Sigmoid colon (tissue), 7 donors: ENCODE measurements at regions of chr10 and their contacts with region 1.

Region 1: GRCh38 chr10:451021-451471 is 238.4 kb downstream of the DIP2C start:
- DNase-seq: no peak
- H3K4me3 ChIP-seq: no peak overlapping the region
- H3K27ac ChIP-seq: peak overlapping the region; percentile 11 to 83 (median 74)
- H3K4me1 ChIP-seq: peaks cover 0 to 52% (median 45%) of the 10 kb centered on the region in 4 donors
- H3K27me3 ChIP-seq: no peaks in the 10 kb centered on the region
- CTCF ChIP-seq: no peak
- EP300 ChIP-seq: no peak
- POLR2A ChIP-seq: no peak

Region 2: GRCh38 chr10:173741-174140 is 277.3 kb before region 1 on chr10:
- intact Hi-C with region 1: no loop called
- DNase-seq: no peak
- H3K4me3 ChIP-seq: no peak overlapping the region
- H3K27ac ChIP-seq: no peak overlapping the region
- H3K4me1 ChIP-seq: peaks cover 0 to 8% (median 2%) of the 10 kb centered on the region in 4 donors
- H3K27me3 ChIP-seq: no peaks in the 10 kb centered on the region
- CTCF ChIP-seq: no peak
- EP300 ChIP-seq: no peak
- POLR2A ChIP-seq: no peak

Region 3: GRCh38 chr10:323651-324293 is 127.3 kb before region 1 on chr10:
- intact Hi-C with region 1: no loop called
- DNase-seq: peak; percentile 88
- H3K4me3 ChIP-seq: peak overlapping the region in 1 of 4 donors; percentile 26
- H3K27ac ChIP-seq: peak overlapping the region; percentile 2 to 68 (median 60)
- H3K4me1 ChIP-seq: peaks cover 0 to 13% (median 7%) of the 10 kb centered on the region in 4 donors
- H3K27me3 ChIP-seq: no peaks in the 10 kb centered on the region
- CTCF ChIP-seq: no peak
- EP300 ChIP-seq: no peak
- POLR2A ChIP-seq: no peak

Region 4: GRCh38 chr10:380313-380955 is 70.6 kb before region 1 on chr10:
- intact Hi-C with region 1: loop called (anchors 5 kb)
- DNase-seq: peak; percentile 58
- H3K4me3 ChIP-seq: no peak overlapping the region
- H3K27ac ChIP-seq: peak overlapping the region in 3 of 4 donors; percentile 71 to 79 (median 76)
- H3K4me1 ChIP-seq: peaks cover 0 to 30% (median 30%) of the 10 kb centered on the region in 4 donors
- H3K27me3 ChIP-seq: no peaks in the 10 kb centered on the region
- CTCF ChIP-seq: no peak
- EP300 ChIP-seq: peak in 2 of 4 donors; percentile 25 to 52
- POLR2A ChIP-seq: no peak